PC-3 (cell line): ENCODE measurements at regions of chr13 and their contacts with region 1.

Region 1: DNA sequence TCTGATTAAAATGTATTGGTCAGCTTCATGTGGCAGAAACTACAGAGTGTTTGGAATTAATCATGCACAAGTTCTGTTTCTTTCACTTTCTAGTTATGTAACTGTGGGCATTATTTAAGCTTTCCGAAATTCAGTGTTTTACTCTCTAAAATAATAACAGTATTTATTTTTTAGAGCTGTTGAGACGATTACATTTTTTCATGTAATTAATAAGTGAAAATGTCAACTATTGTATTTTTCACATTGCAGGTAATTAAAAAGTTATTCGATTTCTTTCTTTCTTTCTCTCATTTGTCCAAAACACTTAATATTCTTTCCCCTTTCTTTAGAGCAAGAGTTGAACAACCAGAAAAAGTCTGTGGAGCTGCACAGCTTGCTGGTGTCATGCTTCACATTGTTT is 559.4 kb upstream of the PCDH20 start:
- DNase-seq: no peak
- ATAC-seq: no peak
- H3K4me3 ChIP-seq: no peak overlapping the region
- H3K27ac ChIP-seq: no peak overlapping the region
- H3K4me1 ChIP-seq: no peaks in the 10 kb centered on the region
- H3K27me3 ChIP-seq: no peaks in the 10 kb centered on the region
- CTCF ChIP-seq: no peak

Region 2: DNA sequence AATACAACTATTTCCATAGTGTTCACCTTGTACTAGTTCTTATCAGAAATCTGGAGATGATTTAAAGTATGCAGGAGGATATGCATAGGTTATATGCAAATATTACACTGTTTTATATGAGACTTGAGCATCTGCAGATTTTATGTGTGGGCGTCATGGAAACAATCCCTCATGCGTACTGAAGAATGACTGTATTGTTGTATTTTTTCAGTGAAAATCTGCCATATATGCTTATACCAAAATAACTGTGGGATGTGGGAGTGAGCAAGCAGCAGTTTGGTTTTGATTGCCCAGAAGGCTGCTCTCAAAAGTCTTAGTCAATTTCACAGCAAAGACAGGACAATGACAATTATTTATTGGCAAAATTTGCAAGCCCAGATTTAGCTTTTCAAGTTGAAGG is 320.5 kb before region 1 on chr13:
- CTCF ChIA-PET with region 1: no interaction called
- POLR2A ChIA-PET with region 1: no interaction called
- intact Hi-C with region 1: no loop called
- DNase-seq: no peak
- ATAC-seq: no peak
- H3K4me3 ChIP-seq: no peak overlapping the region
- H3K27ac ChIP-seq: no peak overlapping the region
- H3K4me1 ChIP-seq: no peaks in the 10 kb centered on the region
- H3K27me3 ChIP-seq: no peaks in the 10 kb centered on the region
- CTCF ChIP-seq: no peak

Region 3: DNA sequence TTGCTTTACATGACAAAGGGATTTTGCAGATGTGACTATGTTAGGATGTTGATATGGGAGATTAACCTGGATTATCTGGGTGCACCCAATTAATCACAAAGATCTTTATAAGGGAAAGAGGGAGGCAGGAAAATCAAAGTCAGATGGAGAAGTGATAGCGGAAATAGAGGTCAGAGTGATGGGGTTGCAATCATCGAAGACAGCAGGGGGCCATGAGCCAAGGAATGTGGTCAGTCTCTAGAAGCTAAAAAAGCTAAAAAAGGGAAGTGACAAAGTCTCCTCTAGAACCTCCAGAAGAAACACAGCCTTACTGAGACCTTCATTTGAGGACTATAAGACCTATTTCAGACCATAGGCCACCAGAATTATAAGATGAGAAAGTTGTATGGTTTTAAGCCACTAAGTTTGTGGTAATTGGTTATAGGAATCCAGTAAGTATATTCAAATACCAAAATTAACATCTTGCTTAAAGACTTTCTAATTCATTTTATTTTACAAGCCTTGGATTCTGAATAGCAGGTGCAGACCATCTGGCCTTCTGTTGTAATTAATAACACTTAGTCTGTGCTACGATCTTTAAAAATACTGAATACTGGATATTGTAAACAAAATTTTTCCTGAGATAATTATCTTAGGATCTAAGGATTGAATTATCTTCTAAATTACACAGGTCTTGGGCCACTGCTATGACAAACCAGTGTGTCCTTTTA is 65.9 kb before region 1 on chr13:
- CTCF ChIA-PET with region 1: no interaction called
- POLR2A ChIA-PET with region 1: interaction called, 10 read pairs
- intact Hi-C with region 1: no loop called
- DNase-seq: no peak
- ATAC-seq: no peak
- H3K4me3 ChIP-seq: no peak overlapping the region
- H3K27ac ChIP-seq: no peak overlapping the region
- H3K4me1 ChIP-seq: no peaks in the 10 kb centered on the region
- H3K27me3 ChIP-seq: no peaks in the 10 kb centered on the region
- CTCF ChIP-seq: no peak

Region 4: GRCh38 chr13:61935710-61936109 is 39.3 kb before region 1 on chr13:
- CTCF ChIA-PET with region 1: no interaction called
- POLR2A ChIA-PET with region 1: no interaction called
- intact Hi-C with region 1: no loop called
- DNase-seq: no peak
- ATAC-seq: no peak
- H3K4me3 ChIP-seq: no peak overlapping the region
- H3K27ac ChIP-seq: no peak overlapping the region
- H3K4me1 ChIP-seq: no peaks in the 10 kb centered on the region
- H3K27me3 ChIP-seq: no peaks in the 10 kb centered on the region
- CTCF ChIP-seq: no peak

Region 5: DNA sequence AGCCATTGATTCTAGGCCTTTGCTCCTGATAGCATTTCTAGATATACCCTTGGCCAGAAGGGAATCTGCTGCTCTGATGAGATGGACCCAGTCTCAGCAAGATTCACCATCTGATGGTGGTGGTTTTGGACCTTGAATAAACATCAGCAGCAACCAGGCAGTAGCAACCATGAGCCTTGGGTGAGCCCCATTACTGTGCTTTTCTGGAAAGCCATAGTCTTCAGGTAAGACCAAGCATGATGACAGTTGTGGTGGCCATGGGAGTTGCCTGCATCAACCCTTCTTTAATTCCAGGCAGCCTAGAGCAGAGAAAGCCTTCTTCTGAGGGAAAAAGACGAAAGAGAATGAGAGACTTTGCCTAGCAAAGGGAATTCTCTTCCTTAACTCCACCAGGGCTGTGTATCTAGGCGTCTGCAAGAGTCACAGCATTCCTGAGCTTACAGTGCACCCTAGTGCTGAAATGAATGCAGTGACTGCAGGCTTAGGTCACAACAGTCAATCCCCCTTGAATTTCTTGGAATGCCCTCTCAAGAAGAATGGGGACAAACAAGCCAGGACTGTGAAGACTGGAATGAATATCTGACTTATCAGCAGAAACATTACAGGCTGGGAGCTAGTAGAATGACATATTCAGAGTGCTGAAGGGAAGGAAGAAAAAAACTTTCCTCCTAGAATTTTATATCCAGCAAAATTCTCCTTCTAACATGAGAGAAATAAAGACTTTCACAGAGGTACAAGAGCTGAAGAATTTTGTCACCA is 383.1 kb after region 1 on chr13:
- CTCF ChIA-PET with region 1: no interaction called
- POLR2A ChIA-PET with region 1: no interaction called
- intact Hi-C with region 1: no loop called
- DNase-seq: peak; percentile 62
- ATAC-seq: peak; percentile 98
- H3K4me3 ChIP-seq: no peak overlapping the region
- H3K27ac ChIP-seq: no peak overlapping the region
- H3K4me1 ChIP-seq: no peaks in the 10 kb centered on the region
- H3K27me3 ChIP-seq: no peaks in the 10 kb centered on the region
- CTCF ChIP-seq: peak; percentile 70